A549 (cell line): ENCODE measurements at regions of chr1 and their contacts with region 1.

Region 1: GRCh38 chr1:34742667-34743270 is 12.1 kb upstream of the GJB5 start:
- DNase-seq: peak; percentile 56 to 69
- ATAC-seq: peak; percentile 92 to 99
- H3K4me3 ChIP-seq: no peak overlapping the region
- H3K27ac ChIP-seq: no peak overlapping the region
- H3K4me1 ChIP-seq: no peaks in the 10 kb centered on the region
- CTCF ChIP-seq: peak; percentile 76
- EP300 ChIP-seq: no peak
- POLR2A ChIP-seq: no peak
- RAD21 ChIP-seq: peak; percentile 82 to 87

Region 2: GRCh38 chr1:33633019-33633801 is 1109.6 kb before region 1 on chr1:
- CTCF ChIA-PET with region 1: interaction called, 35 read pairs
- POLR2A ChIA-PET with region 1: no interaction called
- DNase-seq: peak; percentile 56 to 83
- ATAC-seq: peak; percentile 88 to 94
- H3K4me3 ChIP-seq: no peak overlapping the region
- H3K27ac ChIP-seq: no peak overlapping the region
- H3K4me1 ChIP-seq: no peaks in the 10 kb centered on the region
- CTCF ChIP-seq: peak; percentile 91
- EP300 ChIP-seq: no peak
- POLR2A ChIP-seq: no peak
- RAD21 ChIP-seq: peak; percentile 66 to 76

Region 3: GRCh38 chr1:34460193-34460592 is 282.6 kb before region 1 on chr1:
- CTCF ChIA-PET with region 1: interaction called, 15 read pairs
- POLR2A ChIA-PET with region 1: no interaction called
- DNase-seq: peak; percentile 15 to 21
- ATAC-seq: no peak
- H3K4me3 ChIP-seq: no peak overlapping the region
- H3K27ac ChIP-seq: no peak overlapping the region
- H3K4me1 ChIP-seq: no peaks in the 10 kb centered on the region
- CTCF ChIP-seq: peak; percentile 37
- EP300 ChIP-seq: no peak
- POLR2A ChIP-seq: no peak
- RAD21 ChIP-seq: peak; percentile 11 to 39; a peak in 2 of 5 replicates

Region 4: DNA sequence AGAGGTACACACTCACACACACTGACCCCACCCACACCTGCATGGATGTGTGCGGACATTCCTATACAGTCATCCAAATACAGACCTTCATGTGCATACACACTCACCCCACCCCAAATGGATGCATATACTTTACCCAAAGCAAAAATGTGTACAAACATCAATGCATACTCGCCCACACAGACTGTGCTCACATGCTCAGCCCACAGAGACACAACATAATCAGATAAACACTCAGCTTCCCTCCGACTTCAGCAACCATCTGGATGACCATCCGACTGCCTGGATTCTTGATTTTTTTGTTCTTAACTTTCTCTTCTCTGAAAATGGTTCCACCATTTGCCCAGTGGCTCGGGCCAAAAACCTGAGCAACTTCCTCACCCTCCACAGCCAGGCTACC is 12.3 kb before region 1 on chr1:
- CTCF ChIA-PET with region 1: interaction called, 22 read pairs
- POLR2A ChIA-PET with region 1: no interaction called
- DNase-seq: no peak
- ATAC-seq: no peak
- H3K4me3 ChIP-seq: no peak overlapping the region
- H3K27ac ChIP-seq: no peak overlapping the region
- H3K4me1 ChIP-seq: no peaks in the 10 kb centered on the region
- CTCF ChIP-seq: no peak
- EP300 ChIP-seq: no peak
- POLR2A ChIP-seq: no peak
- RAD21 ChIP-seq: no peak

Region 5: DNA sequence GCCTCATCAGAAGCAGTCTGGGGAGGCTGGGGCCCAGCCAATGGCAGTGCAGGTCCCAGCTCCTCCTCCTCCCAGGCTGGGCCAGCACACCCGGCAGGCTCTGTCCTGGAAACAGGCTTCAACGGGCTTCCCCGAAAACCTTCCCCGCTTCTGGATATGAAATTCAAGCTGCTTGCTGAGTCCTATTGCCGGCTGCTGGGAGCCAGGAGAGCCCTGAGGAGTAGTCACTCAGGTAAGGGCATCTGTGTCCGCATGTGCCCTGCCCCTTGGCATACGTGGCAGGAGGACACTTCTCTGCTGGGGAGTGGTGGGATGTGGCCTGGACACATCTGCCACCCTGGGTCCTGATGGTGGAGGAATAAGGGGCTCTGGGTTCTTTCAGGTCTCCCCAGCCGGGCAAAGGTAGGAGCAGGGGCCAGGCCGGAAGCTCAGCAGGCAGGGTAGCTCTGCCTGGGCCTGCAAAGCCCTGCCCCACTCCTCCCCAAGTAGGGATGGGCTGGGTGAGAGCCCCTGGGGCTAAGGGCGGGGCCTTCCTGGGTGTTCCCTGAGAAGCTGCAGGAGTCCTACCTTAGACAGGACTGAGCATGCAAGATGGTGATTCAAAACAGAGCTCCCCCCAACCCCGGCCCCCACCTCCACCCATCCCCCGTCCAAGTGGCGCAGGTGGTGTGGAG is 12.3 kb after region 1 on chr1 and contains the start of gene GJB5:
- CTCF ChIA-PET with region 1: interaction called, 27 read pairs
- POLR2A ChIA-PET with region 1: no interaction called
- DNase-seq: no peak
- ATAC-seq: no peak
- H3K4me3 ChIP-seq: no peak within 1 kb of the TSS
- H3K27ac ChIP-seq: no peak within 1 kb of the TSS
- H3K4me1 ChIP-seq: peaks cover 6% of the 10 kb centered on the region; the same call in 1 of the 3 replicates
- CTCF ChIP-seq: no peak
- EP300 ChIP-seq: no peak
- POLR2A ChIP-seq: no peak
- RAD21 ChIP-seq: no peak
- polyA plus RNA-seq, gene GJB5: 0.11 and 0.16 TPM in 2 replicates

Region 6: DNA sequence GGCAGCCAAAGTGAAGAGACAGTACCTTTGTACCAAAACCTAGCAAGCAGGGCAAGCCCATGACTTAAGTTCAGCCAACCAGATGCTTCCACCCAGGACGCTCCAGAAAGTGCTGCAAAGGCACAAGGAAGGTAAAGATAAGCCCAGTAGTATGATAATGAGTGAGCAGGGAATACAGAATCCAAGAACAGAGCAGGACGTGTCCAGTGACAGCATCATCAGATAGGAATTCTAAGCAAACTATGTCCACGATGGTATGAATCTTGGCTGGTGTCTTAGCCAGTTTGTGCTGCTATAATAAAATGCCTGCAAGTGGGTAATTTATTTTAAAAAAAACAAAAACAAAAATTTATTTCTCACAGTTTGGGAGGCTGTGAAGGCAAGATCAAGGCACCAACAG is 63.6 kb after region 1 on chr1:
- CTCF ChIA-PET with region 1: no interaction called
- POLR2A ChIA-PET with region 1: no interaction called
- DNase-seq: no peak
- ATAC-seq: no peak
- H3K4me3 ChIP-seq: no peak overlapping the region
- H3K27ac ChIP-seq: no peak overlapping the region
- H3K4me1 ChIP-seq: peaks cover 4% of the 10 kb centered on the region; the same call in 1 of the 3 replicates
- CTCF ChIP-seq: no peak
- EP300 ChIP-seq: no peak
- POLR2A ChIP-seq: no peak
- RAD21 ChIP-seq: no peak